ENCODE measurements at regions of chr3 and their contacts with region 1.

Region 1: DNA sequence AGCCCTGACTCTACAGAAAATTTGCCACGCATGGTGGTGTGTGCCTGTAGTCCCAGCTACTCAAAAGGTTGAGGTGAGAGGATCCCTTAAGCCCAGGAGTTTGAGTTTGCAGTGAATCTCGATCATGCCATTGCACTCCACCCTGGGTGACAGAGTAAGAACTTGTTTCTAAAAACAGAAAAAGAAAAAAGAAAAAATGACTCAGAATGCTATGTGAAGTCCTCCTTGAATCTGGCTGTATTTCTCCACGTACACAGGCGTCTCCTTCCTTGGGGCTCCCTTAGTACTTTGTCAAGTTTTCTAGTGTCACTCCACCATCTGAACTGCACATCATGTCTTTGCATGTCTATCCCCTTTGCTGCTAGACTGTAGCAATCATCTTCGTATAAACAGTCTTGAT is 104.4 kb downstream of the LMLN start:
- DNase-seq: no peak
- ATAC-seq: no peak
- H3K4me3 ChIP-seq: no peak overlapping the region
- H3K27ac ChIP-seq: no peak overlapping the region
- H3K4me1 ChIP-seq: peaks cover 0 to 7% of the 10 kb centered on the region in 2 experiments; a peak in 1 of 5 replicates
- H3K27me3 ChIP-seq: no peaks in the 10 kb centered on the region
- CTCF ChIP-seq: no peak
- EP300 ChIP-seq: no peak
- POLR2A ChIP-seq: no peak
- RAD21 ChIP-seq: no peak

Region 2: GRCh38 chr3:198079771-198080520 is 15.5 kb after region 1 on chr3:
- CTCF ChIA-PET with region 1: no interaction called
- POLR2A ChIA-PET with region 1: interaction called, 13 read pairs
- in situ Hi-C with region 1: no loop called
- intact Hi-C with region 1: no loop called
- DNase-seq: peak; percentile 18 to 78 (median 28)
- ATAC-seq: peak; percentile 84
- H3K4me3 ChIP-seq: peak overlapping the region; percentile 72
- H3K27ac ChIP-seq: peak overlapping the region; percentile 93
- H3K4me1 ChIP-seq: peaks cover 9 to 19% of the 10 kb centered on the region in 2 experiments
- H3K27me3 ChIP-seq: no peaks in the 10 kb centered on the region
- CTCF ChIP-seq: peak; percentile 17 to 76 (median 35); a peak in 3 of 6 replicates
- EP300 ChIP-seq: peak; percentile 40; the same call in 1 of the 2 replicates
- POLR2A ChIP-seq: no peak
- RAD21 ChIP-seq: no peak

Measured in K562 (cell line).